ENCODE measurements at regions of chr17 and their contacts with region 1.

Region 1: GRCh38 chr17:7252176-7253043 is at the start of gene ELP5:
- DNase-seq: peak; percentile 86 to 92
- ATAC-seq: peak; percentile 58 to 61
- H3K4me3 ChIP-seq: peak within 1 kb of the TSS; percentile 69 to 98 (median 81)
- H3K27ac ChIP-seq: peak within 1 kb of the TSS; percentile 98 to 100 (median 98)
- H3K4me1 ChIP-seq: peaks cover 39 to 43% of the 10 kb centered on the region in 2 donors
- H3K27me3 ChIP-seq: no peaks in the 10 kb centered on the region
- CTCF ChIP-seq: peak in 3 of 5 experiments; percentile 36 to 54 (median 40)
- POLR2A ChIP-seq: peak in 1 of 2 donors; percentile 70
- total RNA-seq, gene ELP5: 13.3 to 52.7 (median 26.7) TPM

Region 2: DNA sequence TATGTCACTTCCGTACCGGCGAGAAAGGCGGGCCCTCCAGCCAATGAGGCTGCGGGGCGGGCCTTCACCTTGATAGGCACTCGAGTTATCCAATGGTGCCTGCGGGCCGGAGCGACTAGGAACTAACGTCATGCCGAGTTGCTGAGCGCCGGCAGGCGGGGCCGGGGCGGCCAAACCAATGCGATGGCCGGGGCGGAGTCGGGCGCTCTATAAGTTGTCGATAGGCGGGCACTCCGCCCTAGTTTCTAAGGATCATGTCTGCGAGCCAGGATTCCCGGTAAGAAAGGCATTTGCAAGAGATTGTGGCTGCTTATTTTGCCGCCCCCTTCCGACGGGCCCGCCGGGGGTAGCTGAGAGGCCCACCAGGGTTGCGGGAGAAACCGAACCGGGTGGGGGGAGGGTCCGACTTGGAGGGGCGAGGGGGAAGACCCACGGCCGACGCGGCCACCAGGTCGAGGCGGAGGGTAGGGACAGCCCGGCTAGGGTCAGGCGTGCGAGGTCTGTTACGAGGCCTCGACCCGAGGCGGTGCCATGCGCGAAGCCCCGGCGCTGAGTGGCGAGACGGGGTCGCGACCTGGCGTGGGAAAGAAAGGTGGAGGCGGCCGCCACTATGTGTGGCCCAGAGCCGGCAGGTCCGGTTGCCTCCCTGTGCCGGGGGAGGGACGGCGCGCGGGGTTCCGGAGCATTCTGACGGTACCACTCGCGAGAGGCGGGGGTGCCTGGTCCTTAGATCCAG is 320.3 kb after region 1 on chr17:
- in situ Hi-C with region 1: no loop called
- intact Hi-C with region 1: loop called (anchors 5 kb)
- DNase-seq: peak; percentile 99 to 100
- ATAC-seq: peak; percentile 14 to 83
- H3K4me3 ChIP-seq: peak overlapping the region; percentile 90 to 100 (median 95)
- H3K27ac ChIP-seq: peak overlapping the region; percentile 98 to 100 (median 99)
- H3K4me1 ChIP-seq: peaks cover 37 to 42% of the 10 kb centered on the region in 2 donors
- H3K27me3 ChIP-seq: no peaks in the 10 kb centered on the region
- CTCF ChIP-seq: no peak
- POLR2A ChIP-seq: peak; percentile 98 to 99